B cell (primary cell): ENCODE measurements at regions of chr20 and their contacts with region 1.

Region 1: GRCh38 chr20:35541783-35542588 is at the start of gene ERGIC3:
- DNase-seq: peak; percentile 98
- ATAC-seq: peak; percentile 93
- H3K4me3 ChIP-seq: peak within 1 kb of the TSS; percentile 55 to 94 (median 87)
- H3K4me3 Mint-ChIP-seq: peak within 1 kb of the TSS; percentile 94
- H3K27ac ChIP-seq: peak within 1 kb of the TSS; percentile 63 to 82
- H3K27ac Mint-ChIP-seq: peak within 1 kb of the TSS; percentile 94
- H3K4me1 ChIP-seq: peaks cover 9 to 18% of the 10 kb centered on the region in 2 donors
- H3K4me1 Mint-ChIP-seq: peaks cover 26% of the 10 kb centered on the region
- H3K27me3 ChIP-seq: no peaks in the 10 kb centered on the region
- H3K27me3 Mint-ChIP-seq: no peaks in the 10 kb centered on the region
- CTCF ChIP-seq: no peak
- total RNA-seq, gene ERGIC3: 167 and 191 TPM in 2 replicates

Region 2: DNA sequence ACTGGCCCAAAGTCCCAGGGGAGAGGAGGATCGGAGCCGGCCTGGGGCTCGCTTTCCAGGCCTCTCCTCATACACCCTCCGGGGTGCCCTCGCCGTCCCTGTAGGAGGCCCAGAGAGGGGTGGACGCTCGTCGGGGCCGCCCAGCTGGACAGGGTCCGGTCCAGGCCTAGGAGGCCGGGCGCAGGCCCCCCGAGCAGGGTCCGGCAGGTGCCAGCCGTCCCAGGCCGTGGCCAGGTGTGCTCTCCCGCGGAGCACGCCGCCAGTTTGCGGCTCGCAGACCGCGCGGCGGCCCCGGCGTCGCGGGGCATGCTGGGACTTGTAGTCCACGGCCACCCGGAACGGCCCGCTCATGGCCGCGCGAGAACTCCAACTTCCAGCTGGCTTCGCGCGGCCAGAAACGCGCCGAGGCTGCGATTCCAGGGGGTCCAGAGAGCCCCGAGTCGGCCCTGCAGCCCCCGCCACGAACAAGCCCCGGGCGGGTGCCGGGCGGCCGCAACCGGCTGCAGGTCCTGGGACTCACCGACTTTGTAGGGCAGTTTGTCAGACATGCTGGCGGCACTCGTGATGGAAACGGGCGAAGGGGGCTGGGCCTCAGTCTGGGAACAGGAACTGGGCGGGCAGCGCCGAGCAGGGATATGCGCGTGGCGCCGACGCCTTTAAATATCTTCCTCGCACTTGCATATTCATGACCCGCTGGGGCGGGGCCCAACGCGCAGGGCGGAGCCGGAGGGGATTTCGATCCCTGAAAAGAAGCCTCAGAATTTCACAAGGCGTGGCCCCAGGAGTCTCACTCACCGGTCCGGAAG is 1239.1 kb before region 1 on chr20 and contains the start of gene AHCY:
- CTCF ChIA-PET with region 1: no interaction called
- POLR2A ChIA-PET with region 1: no interaction called
- intact Hi-C with region 1: loop called (anchors 5 kb)
- DNase-seq: peak; percentile 96
- ATAC-seq: peak; percentile 92
- H3K4me3 ChIP-seq: peak within 1 kb of the TSS; percentile 65 to 93 (median 85)
- H3K4me3 Mint-ChIP-seq: peak within 1 kb of the TSS; percentile 97
- H3K27ac ChIP-seq: peak within 1 kb of the TSS; percentile 75 to 87
- H3K27ac Mint-ChIP-seq: peak within 1 kb of the TSS; percentile 95
- H3K4me1 ChIP-seq: peaks cover 4 to 18% of the 10 kb centered on the region in 2 donors
- H3K4me1 Mint-ChIP-seq: peaks cover 19% of the 10 kb centered on the region
- H3K27me3 ChIP-seq: no peaks in the 10 kb centered on the region
- H3K27me3 Mint-ChIP-seq: no peaks in the 10 kb centered on the region
- CTCF ChIP-seq: peak; percentile 13
- total RNA-seq, gene AHCY: 43.6 and 43.8 TPM in 2 replicates

Region 3: GRCh38 chr20:35284267-35284991 is 257.6 kb before region 1 on chr20 and contains the start of gene EIF6:
- CTCF ChIA-PET with region 1: no interaction called
- POLR2A ChIA-PET with region 1: no interaction called
- intact Hi-C with region 1: loop called (anchors 5 kb)
- DNase-seq: peak; percentile 83
- ATAC-seq: peak; percentile 92
- H3K4me3 ChIP-seq: peak within 1 kb of the TSS; percentile 59 to 97 (median 93)
- H3K4me3 Mint-ChIP-seq: peak within 1 kb of the TSS; percentile 95
- H3K27ac ChIP-seq: peak within 1 kb of the TSS; percentile 71 to 90
- H3K27ac Mint-ChIP-seq: peak within 1 kb of the TSS; percentile 96
- H3K4me1 ChIP-seq: peaks cover 13 to 19% of the 10 kb centered on the region in 2 donors
- H3K4me1 Mint-ChIP-seq: peaks cover 32% of the 10 kb centered on the region
- H3K27me3 ChIP-seq: no peaks in the 10 kb centered on the region
- H3K27me3 Mint-ChIP-seq: no peaks in the 10 kb centered on the region
- CTCF ChIP-seq: no peak
- total RNA-seq, gene EIF6: 74.0 and 81.2 TPM in 2 replicates

Region 4: GRCh38 chr20:35490736-35491181 is 51.2 kb before region 1 on chr20:
- CTCF ChIA-PET with region 1: interaction called, 7 read pairs
- POLR2A ChIA-PET with region 1: no interaction called
- intact Hi-C with region 1: loop called (anchors 2 kb)
- DNase-seq: peak; percentile 81
- ATAC-seq: peak; percentile 100
- H3K4me3 ChIP-seq: peak overlapping the region; percentile 73 to 92 (median 85)
- H3K4me3 Mint-ChIP-seq: peak overlapping the region; percentile 98
- H3K27ac ChIP-seq: peak overlapping the region; percentile 83 to 92
- H3K27ac Mint-ChIP-seq: peak overlapping the region; percentile 96
- H3K4me1 ChIP-seq: peaks cover 39 to 58% of the 10 kb centered on the region in 2 donors
- H3K4me1 Mint-ChIP-seq: peaks cover 54% of the 10 kb centered on the region
- H3K27me3 ChIP-seq: no peaks in the 10 kb centered on the region
- H3K27me3 Mint-ChIP-seq: no peaks in the 10 kb centered on the region
- CTCF ChIP-seq: no peak

Region 5: GRCh38 chr20:35664544-35665221 is 122.7 kb after region 1 on chr20 and contains the starts of genes CPNE1 and RBM12:
- CTCF ChIA-PET with region 1: no interaction called
- POLR2A ChIA-PET with region 1: interaction called, 4 read pairs
- intact Hi-C with region 1: loop called (anchors 2 kb)
- DNase-seq: peak; percentile 96
- ATAC-seq: peak; percentile 77
- H3K4me3 ChIP-seq: peak within 1 kb of the TSS; percentile 76 to 98 (median 90)
- H3K4me3 Mint-ChIP-seq: peak within 1 kb of the TSS; percentile 92
- H3K27ac ChIP-seq: peak within 1 kb of the TSS; percentile 96 to 97
- H3K27ac Mint-ChIP-seq: peak within 1 kb of the TSS; percentile 100
- H3K4me1 ChIP-seq: peaks cover 39 to 42% of the 10 kb centered on the region in 2 donors
- H3K4me1 Mint-ChIP-seq: peaks cover 48% of the 10 kb centered on the region
- H3K27me3 ChIP-seq: no peaks in the 10 kb centered on the region
- H3K27me3 Mint-ChIP-seq: no peaks in the 10 kb centered on the region
- CTCF ChIP-seq: no peak
- total RNA-seq, gene CPNE1: 323 and 331 TPM in 2 replicates
- total RNA-seq, gene RBM12: 144 and 145 TPM in 2 replicates